ENCODE measurements at regions of chr20 and their contacts with region 1.

Region 1: GRCh38 chr20:8722276-8722928 is 346.5 kb upstream of the PLCB4 start:
- DNase-seq: peak; percentile 72 to 83 (median 82)
- H3K4me3 ChIP-seq: no peak overlapping the region
- H3K27ac ChIP-seq: no peak overlapping the region
- H3K4me1 ChIP-seq: no peaks in the 10 kb centered on the region
- H3K27me3 ChIP-seq: no peaks in the 10 kb centered on the region

Region 2: GRCh38 chr20:7935027-7935551 is 787.3 kb before region 1 on chr20:
- CTCF ChIA-PET with region 1: interaction called, 106 read pairs
- POLR2A ChIA-PET with region 1: no interaction called
- DNase-seq: peak in 2 of 3 donors; percentile 20 to 23
- H3K4me3 ChIP-seq: no peak overlapping the region
- H3K27ac ChIP-seq: no peak overlapping the region
- H3K4me1 ChIP-seq: peaks cover 0 to 12% (median 4%) of the 10 kb centered on the region in 4 experiments
- H3K27me3 ChIP-seq: no peaks in the 10 kb centered on the region

Region 3: DNA sequence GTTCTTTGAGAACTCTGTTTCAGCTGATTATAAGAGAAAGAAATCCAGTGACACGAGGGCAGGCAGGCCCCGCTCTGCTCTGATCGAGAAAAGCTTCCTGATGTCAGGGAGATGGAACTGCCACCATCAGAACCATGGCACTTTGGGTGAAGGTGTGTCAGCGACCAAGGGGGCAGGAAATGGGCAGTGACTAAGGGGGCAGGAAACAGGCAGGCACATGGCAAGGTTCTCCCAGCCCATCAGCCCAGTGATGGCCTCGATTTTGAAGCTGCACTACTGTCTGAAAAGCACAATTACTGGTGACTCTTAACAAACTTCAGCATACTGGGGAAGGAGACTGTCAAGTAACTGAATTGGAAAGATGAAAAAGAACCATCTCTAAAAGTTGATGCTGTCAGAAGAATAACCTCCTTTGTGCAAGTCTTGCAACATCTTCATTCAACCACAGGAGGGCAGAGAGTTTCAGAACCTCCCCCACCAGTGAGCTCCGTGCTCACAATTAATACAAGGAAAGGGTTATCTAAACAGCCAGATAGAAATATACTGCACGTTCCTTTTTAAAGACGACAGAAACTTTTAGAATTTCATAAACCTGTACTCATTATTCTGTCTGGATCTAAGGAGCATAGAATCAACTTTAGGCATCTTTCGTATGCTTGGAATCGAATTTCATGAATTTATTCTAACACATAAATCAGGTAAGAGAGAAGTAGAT is 741.9 kb before region 1 on chr20:
- CTCF ChIA-PET with region 1: interaction called, 73 read pairs
- POLR2A ChIA-PET with region 1: interaction called, 3 read pairs
- DNase-seq: peak; percentile 39 to 72 (median 66)
- H3K4me3 ChIP-seq: no peak overlapping the region
- H3K27ac ChIP-seq: no peak overlapping the region
- H3K4me1 ChIP-seq: peaks cover 0 to 2% (median 0%) of the 10 kb centered on the region in 4 experiments
- H3K27me3 ChIP-seq: no peaks in the 10 kb centered on the region

Region 4: DNA sequence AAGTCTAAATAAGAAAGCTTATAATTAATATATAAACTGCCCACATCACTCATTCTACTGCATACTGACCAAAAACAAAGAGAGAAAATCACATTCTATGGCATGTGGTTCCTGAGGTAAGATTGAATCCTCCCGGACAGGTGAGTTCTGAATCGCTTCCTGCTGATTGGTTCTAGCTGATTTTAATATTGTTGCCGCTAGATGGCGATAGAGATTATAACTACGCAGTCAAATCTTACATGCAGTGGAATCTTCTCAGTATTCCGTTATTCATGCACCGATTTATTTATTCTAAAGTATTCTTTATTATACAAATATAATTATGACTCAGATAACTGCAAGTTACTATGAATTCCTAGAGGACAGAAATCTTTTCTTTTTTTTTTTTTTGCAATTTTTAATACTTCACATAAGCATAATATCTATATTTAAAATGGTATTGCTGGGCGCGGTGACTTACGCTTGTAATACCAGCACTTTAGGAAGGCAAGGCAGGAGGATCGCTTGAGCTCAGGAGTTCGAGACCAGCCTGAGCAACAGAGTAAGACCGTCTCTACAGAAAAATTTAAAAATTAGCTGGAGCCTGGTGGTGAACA is 678.6 kb before region 1 on chr20:
- CTCF ChIA-PET with region 1: interaction called, 148 read pairs
- POLR2A ChIA-PET with region 1: no interaction called
- DNase-seq: peak; percentile 61 to 79 (median 74)
- H3K4me3 ChIP-seq: no peak overlapping the region
- H3K27ac ChIP-seq: no peak overlapping the region
- H3K4me1 ChIP-seq: peaks cover 0 to 3% (median 1%) of the 10 kb centered on the region in 4 experiments
- H3K27me3 ChIP-seq: no peaks in the 10 kb centered on the region

Region 5: DNA sequence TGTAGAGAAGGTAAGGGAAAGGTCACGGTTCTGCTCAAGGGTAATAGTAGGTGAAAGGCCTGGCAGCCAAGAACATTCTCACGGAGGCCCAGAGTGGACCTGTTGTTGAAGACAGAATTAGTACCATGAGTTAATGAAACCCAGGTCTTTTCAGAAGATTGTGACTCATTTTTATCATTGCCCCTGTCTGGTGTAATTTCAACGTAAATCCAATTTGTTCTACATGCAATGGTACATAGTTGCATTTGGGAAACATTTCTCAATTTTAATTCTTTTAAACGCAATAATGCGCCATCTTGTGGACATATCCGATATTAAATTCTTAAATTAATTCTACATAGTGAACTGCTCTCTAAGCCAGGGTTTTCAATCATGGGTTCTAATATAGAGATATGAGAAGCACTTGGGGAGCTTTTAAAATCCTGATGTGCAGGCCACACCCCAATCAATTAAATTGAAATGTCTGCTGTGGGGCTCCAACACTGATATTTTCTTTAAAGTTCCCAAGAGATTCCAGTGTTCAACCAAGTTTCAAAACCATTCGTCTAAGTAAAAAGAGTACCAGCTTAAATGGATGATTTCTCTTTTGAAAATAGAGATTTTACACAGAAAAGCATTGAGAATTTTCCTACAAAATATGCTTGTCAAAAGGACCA is 332.9 kb before region 1 on chr20:
- CTCF ChIA-PET with region 1: interaction called, 20 read pairs
- POLR2A ChIA-PET with region 1: no interaction called
- DNase-seq: peak; percentile 59 to 78 (median 73)
- H3K4me3 ChIP-seq: no peak overlapping the region
- H3K27ac ChIP-seq: no peak overlapping the region
- H3K4me1 ChIP-seq: peaks cover 0 to 22% (median 11%) of the 10 kb centered on the region in 4 experiments
- H3K27me3 ChIP-seq: no peaks in the 10 kb centered on the region

Region 6: DNA sequence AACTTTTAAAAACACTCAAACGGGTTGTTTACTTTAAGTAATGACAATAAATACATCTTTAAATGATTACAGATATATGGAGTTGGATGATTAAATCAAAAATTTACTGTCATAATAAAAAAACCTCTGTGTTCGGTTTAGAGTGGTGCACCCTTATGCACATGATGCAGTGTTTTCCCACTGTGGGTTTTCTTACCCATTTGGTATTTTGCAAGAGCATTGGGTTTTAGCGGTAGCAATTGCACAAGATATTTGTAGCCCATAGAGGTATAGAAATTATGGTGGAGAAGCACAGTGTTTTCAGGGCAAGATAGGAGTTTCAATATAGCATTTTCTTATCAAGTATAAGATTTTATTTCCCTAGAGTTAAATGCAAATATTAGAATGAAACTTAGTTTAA is 64.3 kb before region 1 on chr20:
- CTCF ChIA-PET with region 1: no interaction called
- POLR2A ChIA-PET with region 1: no interaction called
- DNase-seq: no peak
- H3K4me3 ChIP-seq: no peak overlapping the region
- H3K27ac ChIP-seq: no peak overlapping the region
- H3K4me1 ChIP-seq: peaks cover 0 to 2% (median 0%) of the 10 kb centered on the region in 4 experiments
- H3K27me3 ChIP-seq: no peaks in the 10 kb centered on the region

Region 7: GRCh38 chr20:8735674-8736073 is 13.3 kb after region 1 on chr20:
- CTCF ChIA-PET with region 1: interaction called, 13 read pairs
- POLR2A ChIA-PET with region 1: no interaction called
- DNase-seq: no peak
- H3K4me3 ChIP-seq: no peak overlapping the region
- H3K27ac ChIP-seq: no peak overlapping the region
- H3K4me1 ChIP-seq: no peaks in the 10 kb centered on the region
- H3K27me3 ChIP-seq: no peaks in the 10 kb centered on the region

Measured in common myeloid progenitor, CD34-positive (primary cell).